GM12878 (cell line): ENCODE measurements at regions of chr16 and their contacts with region 1.

Region 1: DNA sequence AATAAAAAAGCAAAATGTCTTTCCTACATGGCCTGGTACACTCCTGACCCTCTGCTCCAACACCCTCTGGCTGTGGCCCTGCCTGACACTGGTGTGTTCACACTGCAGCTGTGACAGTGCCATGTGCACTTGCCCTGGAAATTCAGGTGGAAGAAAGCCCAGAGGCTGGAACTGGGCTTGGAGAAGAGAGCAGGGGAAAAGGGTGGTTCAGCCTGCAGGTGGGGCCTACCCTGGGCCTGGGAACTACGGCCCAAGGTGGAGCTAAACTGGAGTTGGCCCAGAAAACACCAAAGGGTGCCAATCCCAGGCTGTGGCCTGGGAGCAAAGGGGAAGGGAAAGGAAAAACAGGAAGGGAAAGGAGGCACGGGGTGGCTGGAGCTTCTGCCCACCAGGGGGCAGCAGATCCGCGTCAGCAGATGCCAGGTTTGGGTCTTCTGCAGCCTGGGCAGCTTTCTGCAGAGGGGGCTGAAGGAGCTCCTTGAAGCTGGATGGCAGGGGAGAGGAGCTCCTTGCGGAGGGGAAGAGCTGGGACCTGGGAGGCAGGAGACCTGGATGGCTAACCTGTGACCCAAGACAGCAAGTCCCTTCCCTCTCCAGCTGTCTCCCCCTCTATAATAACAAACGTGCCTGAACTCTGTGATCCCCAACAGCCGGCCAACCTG is 15.4 kb upstream of the CTCF start:
- DNase-seq: no peak
- ATAC-seq: peak; percentile 74
- H3K4me3 ChIP-seq: no peak overlapping the region
- H3K27ac ChIP-seq: peak overlapping the region; percentile 87
- H3K4me1 ChIP-seq: peaks cover 28% of the 10 kb centered on the region
- H3K27me3 ChIP-seq: no peaks in the 10 kb centered on the region
- CTCF ChIP-seq: peak; percentile 98 to 99 (median 98); a peak in 5 of 6 replicates
- EP300 ChIP-seq: no peak
- POLR2A ChIP-seq: peak; percentile 18; the same call in 1 of the 2 replicates
- RAD21 ChIP-seq: peak; percentile 92

Region 2: GRCh38 chr16:67514382-67514828 is 32.5 kb before region 1 on chr16:
- CTCF ChIA-PET with region 1: interaction called, 36 read pairs
- POLR2A ChIA-PET with region 1: no interaction called
- RAD21 ChIA-PET with region 1: interaction called, 18 read pairs
- SMC1A ChIA-PET with region 1: interaction called, 5 read pairs
- in situ Hi-C with region 1: no loop called
- intact Hi-C with region 1: no loop called
- DNase-seq: peak; percentile 90
- ATAC-seq: peak; percentile 71
- H3K4me3 ChIP-seq: no peak overlapping the region
- H3K27ac ChIP-seq: peak overlapping the region; percentile 38; the same call in 1 of the 2 replicates
- H3K4me1 ChIP-seq: peaks cover 45% of the 10 kb centered on the region
- H3K27me3 ChIP-seq: no peaks in the 10 kb centered on the region
- CTCF ChIP-seq: peak; percentile 66 to 82 (median 71); a peak in 5 of 6 replicates
- EP300 ChIP-seq: no peak
- POLR2A ChIP-seq: no peak
- RAD21 ChIP-seq: peak; percentile 77

Region 3: DNA sequence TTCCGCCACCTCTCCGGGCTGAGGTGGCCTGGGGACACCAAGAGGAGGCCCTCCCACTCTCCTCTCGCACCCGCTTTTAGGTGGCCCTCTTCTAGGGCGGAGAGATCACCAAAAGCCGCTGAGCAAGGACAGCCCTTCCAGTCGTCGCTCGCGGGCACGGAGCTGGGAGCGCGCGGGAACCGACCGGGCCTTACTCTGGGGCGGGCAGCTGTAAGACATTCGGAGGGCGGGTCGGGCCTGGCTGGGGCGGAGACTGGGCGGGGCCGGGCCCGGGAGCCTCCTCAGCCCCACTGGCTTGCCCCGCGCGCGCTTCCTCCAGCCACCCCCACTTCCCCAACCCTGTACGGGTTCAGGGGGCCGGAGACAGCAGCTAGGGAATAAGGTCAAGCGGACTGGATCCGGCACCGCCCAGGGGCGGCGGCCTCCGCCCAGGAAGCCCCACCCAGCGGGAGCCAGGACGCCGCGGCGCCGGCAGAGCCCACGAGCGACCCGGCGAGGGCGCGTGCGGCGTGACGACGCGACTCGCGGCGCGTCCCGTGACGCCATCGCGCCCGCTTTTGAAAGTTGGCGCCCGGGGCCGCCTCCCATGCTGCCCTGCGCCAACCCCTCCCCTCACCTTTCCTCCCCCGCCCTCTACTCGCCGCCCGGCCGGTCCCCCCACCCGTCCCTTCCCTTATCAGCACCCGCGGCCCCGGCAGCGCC is 15.1 kb after region 1 on chr16:
- CTCF ChIA-PET with region 1: interaction called, 77 read pairs
- POLR2A ChIA-PET with region 1: interaction called, 18 read pairs
- RAD21 ChIA-PET with region 1: interaction called, 50 read pairs
- SMC1A ChIA-PET with region 1: interaction called, 19 read pairs
- in situ Hi-C with region 1: no loop called
- intact Hi-C with region 1: loop called (anchors 2 kb)
- DNase-seq: peak; percentile 89
- ATAC-seq: peak; percentile 91
- H3K4me3 ChIP-seq: peak overlapping the region; percentile 74
- H3K27ac ChIP-seq: peak overlapping the region; percentile 87
- H3K4me1 ChIP-seq: peaks cover 15% of the 10 kb centered on the region
- H3K27me3 ChIP-seq: no peaks in the 10 kb centered on the region
- CTCF ChIP-seq: no peak
- EP300 ChIP-seq: 0 out of 4 replicates have a peak, but pooled peaks of 1 of the 2 experiments have one; percentile 10
- POLR2A ChIP-seq: peak; percentile 83
- RAD21 ChIP-seq: no peak

Region 4: GRCh38 chr16:67660564-67661028 is 113.7 kb after region 1 on chr16 and contains the start of gene PARD6A:
- CTCF ChIA-PET with region 1: interaction called, 11 read pairs
- POLR2A ChIA-PET with region 1: interaction called, 8 read pairs
- RAD21 ChIA-PET with region 1: interaction called, 7 read pairs
- SMC1A ChIA-PET with region 1: interaction called, 5 read pairs
- in situ Hi-C with region 1: no loop called
- intact Hi-C with region 1: no loop called
- DNase-seq: peak; percentile 87
- ATAC-seq: peak; percentile 84
- H3K4me3 ChIP-seq: peak within 1 kb of the TSS; percentile 92
- H3K27ac ChIP-seq: peak within 1 kb of the TSS; percentile 80
- H3K4me1 ChIP-seq: peaks cover 10% of the 10 kb centered on the region
- H3K27me3 ChIP-seq: no peaks in the 10 kb centered on the region
- CTCF ChIP-seq: no peak
- EP300 ChIP-seq: no peak
- POLR2A ChIP-seq: no peak
- RAD21 ChIP-seq: no peak
- polyA plus RNA-seq, gene PARD6A: 0.42 to 0.62 TPM

Region 5: DNA sequence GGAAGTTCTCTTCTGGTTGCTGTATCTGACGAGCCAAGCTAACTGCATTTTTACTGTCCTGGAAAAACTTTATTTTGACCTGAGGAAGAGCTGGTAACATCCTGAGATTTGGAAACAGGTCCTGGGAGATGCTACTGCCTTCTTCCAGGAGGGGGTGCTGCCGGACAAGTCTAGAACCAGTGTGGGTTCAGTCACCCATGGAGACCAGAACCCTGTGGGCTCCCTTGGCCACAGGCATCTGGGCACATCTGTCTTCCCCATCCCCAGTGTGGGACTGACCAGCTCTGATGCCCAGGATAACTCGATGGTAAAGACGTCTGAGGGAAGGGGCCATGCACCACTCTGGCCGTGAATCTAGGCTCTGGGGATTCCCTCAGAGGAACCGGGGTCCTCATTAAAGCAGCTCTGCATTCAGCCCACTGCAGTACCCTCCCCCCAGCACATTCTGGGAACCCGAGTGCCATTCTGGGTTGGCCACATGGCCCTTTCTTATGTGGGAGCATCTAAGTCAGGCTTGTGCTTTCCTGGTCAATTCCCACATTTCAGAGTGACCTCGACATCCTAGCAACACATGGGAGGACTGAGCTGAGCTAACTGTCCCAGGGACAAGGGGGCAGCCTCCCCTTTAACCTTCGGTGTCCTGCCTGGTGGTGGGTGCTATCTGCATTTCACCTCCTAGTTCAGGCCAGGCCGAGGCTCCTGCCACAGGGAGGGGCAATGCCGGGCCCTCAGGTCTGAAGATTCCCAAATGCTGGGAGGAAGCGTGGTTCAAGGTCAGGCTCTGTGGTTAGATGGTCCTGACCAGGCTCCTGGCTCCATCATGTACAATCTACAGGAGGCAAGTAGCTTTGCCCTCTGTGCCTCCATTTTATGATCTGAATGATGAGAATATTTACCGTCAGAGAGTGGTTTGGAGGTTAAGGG is 126.1 kb after region 1 on chr16:
- CTCF ChIA-PET with region 1: interaction called, 49 read pairs
- POLR2A ChIA-PET with region 1: no interaction called
- RAD21 ChIA-PET with region 1: interaction called, 22 read pairs
- SMC1A ChIA-PET with region 1: interaction called, 19 read pairs
- in situ Hi-C with region 1: no loop called
- intact Hi-C with region 1: loop called (anchors 1 kb)
- DNase-seq: no peak
- ATAC-seq: peak; percentile 59
- H3K4me3 ChIP-seq: no peak overlapping the region
- H3K27ac ChIP-seq: no peak overlapping the region
- H3K4me1 ChIP-seq: peaks cover 24% of the 10 kb centered on the region
- H3K27me3 ChIP-seq: no peaks in the 10 kb centered on the region
- CTCF ChIP-seq: peak; percentile 83 to 94 (median 88)
- EP300 ChIP-seq: no peak
- POLR2A ChIP-seq: no peak
- RAD21 ChIP-seq: peak; percentile 94